ENCODE measurements at regions of chr6 and their contacts with region 1.

Region 1: DNA sequence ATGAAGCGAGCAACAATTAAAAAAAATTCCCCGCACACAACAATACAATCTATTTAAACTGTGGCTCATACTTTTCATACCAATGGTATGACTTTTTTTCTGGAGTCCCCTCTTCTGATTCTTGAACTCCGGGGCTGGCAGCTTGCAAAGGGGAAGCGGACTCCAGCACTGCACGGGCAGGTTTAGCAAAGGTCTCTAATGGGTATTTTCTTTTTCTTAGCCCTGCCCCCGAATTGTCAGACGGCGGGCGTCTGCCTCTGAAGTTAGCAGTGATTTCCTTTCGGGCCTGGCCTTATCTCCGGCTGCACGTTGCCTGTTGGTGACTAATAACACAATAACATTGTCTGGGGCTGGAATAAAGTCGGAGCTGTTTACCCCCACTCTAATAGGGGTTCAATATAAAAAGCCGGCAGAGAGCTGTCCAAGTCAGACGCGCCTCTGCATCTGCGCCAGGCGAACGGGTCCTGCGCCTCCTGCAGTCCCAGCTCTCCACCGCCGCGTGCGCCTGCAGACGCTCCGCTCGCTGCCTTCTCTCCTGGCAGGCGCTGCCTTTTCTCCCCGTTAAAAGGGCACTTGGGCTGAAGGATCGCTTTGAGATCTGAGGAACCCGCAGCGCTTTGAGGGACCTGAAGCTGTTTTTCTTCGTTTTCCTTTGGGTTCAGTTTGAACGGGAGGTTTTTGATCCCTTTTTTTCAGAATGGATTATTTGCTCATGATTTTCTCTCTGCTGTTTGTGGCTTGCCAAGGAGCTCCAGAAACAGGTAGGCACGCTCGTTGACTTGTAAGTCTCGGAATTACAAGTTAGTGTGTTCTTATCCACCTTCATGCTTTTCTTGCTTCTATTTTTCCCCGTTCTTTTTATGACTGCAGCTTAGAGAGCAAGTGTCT is at the start of gene EDN1:
- DNase-seq: peak; percentile 72 to 86 (median 80)
- ATAC-seq: peak; percentile 78 to 95 (median 91)
- H3K4me3 ChIP-seq: peak within 1 kb of the TSS; percentile 1 to 62 (median 50)
- H3K27ac ChIP-seq: peak within 1 kb of the TSS in 11 of 12 donors; percentile 13 to 74 (median 41)
- H3K4me1 ChIP-seq: peaks cover 0 to 27% (median 9%) of the 10 kb centered on the region in 12 donors
- H3K27me3 ChIP-seq: peaks cover 0 to 15% (median 4%) of the 10 kb centered on the region in 9 donors
- CTCF ChIP-seq: peak; percentile 27 to 66 (median 42)
- POLR2A ChIP-seq: peak in 1 of 2 donors; percentile 67
- total RNA-seq, gene EDN1: 1.0 to 11.6 (median 3.2) TPM

Region 2: DNA sequence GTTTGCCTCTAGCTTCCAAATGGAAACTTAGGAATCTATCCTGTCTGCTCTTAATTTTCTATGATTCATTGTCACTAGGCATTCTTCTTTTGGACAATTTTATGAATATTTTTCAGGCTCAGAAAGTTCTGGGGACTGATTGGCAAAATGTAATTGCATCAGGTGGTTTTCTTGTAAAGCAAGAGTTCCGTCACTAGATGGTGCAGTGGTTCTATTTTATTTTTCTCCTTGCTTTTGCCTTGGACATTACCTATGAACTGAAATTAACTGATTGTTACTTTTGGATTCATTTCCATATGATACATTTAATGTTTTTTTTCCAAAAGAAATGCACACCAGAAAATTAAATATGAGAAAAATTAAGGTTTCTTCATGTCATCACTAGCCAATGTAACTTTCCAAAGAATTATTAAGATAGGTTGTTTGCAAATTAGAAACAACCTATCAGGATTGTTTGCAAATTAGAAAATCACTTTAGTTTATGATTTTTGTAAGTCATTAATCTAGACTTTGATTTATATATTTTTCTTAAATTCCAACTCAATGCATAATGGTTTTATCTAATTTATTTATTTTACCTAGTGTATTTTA is 704.7 kb before region 1 on chr6:
- intact Hi-C with region 1: loop called in 4 of 10 experiments (anchors 2 to 10 kb)
- DNase-seq: no peak
- ATAC-seq: peak in 1 of 4 donors; percentile 41
- H3K4me3 ChIP-seq: no peak overlapping the region
- H3K27ac ChIP-seq: no peak overlapping the region
- H3K4me1 ChIP-seq: peaks cover 0 to 5% (median 0%) of the 10 kb centered on the region in 12 donors
- H3K27me3 ChIP-seq: no peaks in the 10 kb centered on the region
- CTCF ChIP-seq: peak; percentile 47 to 75 (median 70)
- POLR2A ChIP-seq: no peak

Region 3: GRCh38 chr6:11659757-11660156 is 630.4 kb before region 1 on chr6:
- intact Hi-C with region 1: loop called in 9 of 10 experiments (anchors 1 to 5 kb)
- DNase-seq: no peak
- ATAC-seq: no peak
- H3K4me3 ChIP-seq: no peak overlapping the region
- H3K27ac ChIP-seq: no peak overlapping the region
- H3K4me1 ChIP-seq: peaks cover 0 to 19% (median 5%) of the 10 kb centered on the region in 12 donors
- H3K27me3 ChIP-seq: peaks cover 0 to 5% (median 0%) of the 10 kb centered on the region in 9 donors
- CTCF ChIP-seq: no peak
- POLR2A ChIP-seq: no peak

Region 4: DNA sequence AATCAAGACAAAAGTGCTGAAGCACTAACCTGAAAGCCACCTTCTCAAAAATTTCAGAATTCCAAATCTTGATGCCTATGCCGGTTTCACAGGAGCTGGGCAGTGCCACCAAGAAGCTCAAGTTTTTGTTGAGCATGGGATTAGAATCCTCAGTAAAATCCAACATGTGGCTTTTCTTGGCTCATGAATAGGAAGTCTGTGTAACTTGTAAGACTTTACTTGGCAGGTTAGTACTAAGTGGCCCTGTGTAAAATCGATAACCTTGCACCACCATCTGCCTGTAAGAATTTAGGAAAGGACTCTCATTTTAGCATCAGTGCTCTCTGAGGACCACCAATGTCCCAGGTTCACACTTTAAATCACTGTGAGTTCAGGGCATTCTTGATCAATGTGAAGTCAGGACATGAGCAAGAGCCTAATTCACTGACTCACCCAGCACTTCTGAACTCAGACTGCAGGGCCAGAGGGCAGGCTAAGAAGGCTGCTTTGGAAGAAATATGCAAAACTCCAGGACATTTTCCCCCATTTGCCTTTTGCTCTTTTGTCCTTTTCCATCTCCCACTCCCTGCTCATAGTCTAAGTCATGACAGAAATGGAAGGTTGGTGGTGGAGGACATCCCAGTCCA is 113.1 kb after region 1 on chr6:
- intact Hi-C with region 1: loop called in 2 of 10 experiments (anchors 10 kb)
- DNase-seq: no peak
- ATAC-seq: peak in 3 of 4 donors; percentile 30 to 78 (median 56)
- H3K4me3 ChIP-seq: no peak overlapping the region
- H3K27ac ChIP-seq: peak overlapping the region in 2 of 12 donors; percentile 32 to 47
- H3K4me1 ChIP-seq: peaks cover 0 to 33% (median 6%) of the 10 kb centered on the region in 12 donors
- H3K27me3 ChIP-seq: no peaks in the 10 kb centered on the region
- CTCF ChIP-seq: no peak
- POLR2A ChIP-seq: no peak

Region 5: GRCh38 chr6:12890171-12890790 is 600.1 kb after region 1 on chr6:
- intact Hi-C with region 1: loop called in 1 of 10 experiments (anchors 10 kb)
- DNase-seq: no peak
- ATAC-seq: no peak
- H3K4me3 ChIP-seq: no peak overlapping the region
- H3K27ac ChIP-seq: no peak overlapping the region
- H3K4me1 ChIP-seq: peaks cover 0 to 18% (median 5%) of the 10 kb centered on the region in 12 donors
- H3K27me3 ChIP-seq: no peaks in the 10 kb centered on the region
- CTCF ChIP-seq: peak in 9 of 12 donors; percentile 12 to 42 (median 34)
- POLR2A ChIP-seq: no peak

Measured in heart left ventricle (tissue), 16 donors.